Activated CD4-positive, alpha-beta memory T cell treated with anti-CD3 and anti-CD28 coated beads for 36 hours (primary cell): ENCODE measurements at regions of chr1 and their contacts with region 1.

Region 1: GRCh38 chr1:12386130-12386529 is 156.3 kb downstream of the VPS13D start:
- DNase-seq: peak; percentile 39
- H3K4me3 Mint-ChIP-seq: no peak overlapping the region
- H3K27ac Mint-ChIP-seq: peak overlapping the region; percentile 69
- H3K4me1 Mint-ChIP-seq: peaks cover 44% of the 10 kb centered on the region
- H3K27me3 Mint-ChIP-seq: no peaks in the 10 kb centered on the region

Region 2: DNA sequence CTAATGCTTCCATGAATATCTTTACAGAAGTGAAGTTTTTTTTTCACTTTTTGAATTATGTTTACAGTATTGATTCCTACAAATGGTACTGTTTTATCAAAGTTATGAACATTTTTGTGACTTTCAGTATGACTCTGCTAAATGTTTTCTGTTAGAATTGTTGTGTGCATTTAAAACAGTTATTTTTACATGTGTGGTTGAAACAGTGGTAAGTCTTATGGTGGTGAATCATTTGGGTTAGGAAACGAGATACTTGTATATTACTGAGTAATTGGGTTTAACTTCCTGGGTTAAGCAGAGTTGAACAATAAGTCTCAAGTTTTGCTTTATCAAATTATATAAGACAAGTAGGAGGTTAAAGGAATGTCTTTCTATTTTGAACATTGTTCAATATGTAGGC is 89.5 kb before region 1 on chr1:
- CTCF ChIA-PET with region 1: no interaction called
- POLR2A ChIA-PET with region 1: no interaction called
- intact Hi-C with region 1: loop called (anchors 10 kb)
- DNase-seq: no peak
- H3K4me3 Mint-ChIP-seq: no peak overlapping the region
- H3K27ac Mint-ChIP-seq: no peak overlapping the region
- H3K4me1 Mint-ChIP-seq: peaks cover 24% of the 10 kb centered on the region
- H3K27me3 Mint-ChIP-seq: no peaks in the 10 kb centered on the region

Region 3: DNA sequence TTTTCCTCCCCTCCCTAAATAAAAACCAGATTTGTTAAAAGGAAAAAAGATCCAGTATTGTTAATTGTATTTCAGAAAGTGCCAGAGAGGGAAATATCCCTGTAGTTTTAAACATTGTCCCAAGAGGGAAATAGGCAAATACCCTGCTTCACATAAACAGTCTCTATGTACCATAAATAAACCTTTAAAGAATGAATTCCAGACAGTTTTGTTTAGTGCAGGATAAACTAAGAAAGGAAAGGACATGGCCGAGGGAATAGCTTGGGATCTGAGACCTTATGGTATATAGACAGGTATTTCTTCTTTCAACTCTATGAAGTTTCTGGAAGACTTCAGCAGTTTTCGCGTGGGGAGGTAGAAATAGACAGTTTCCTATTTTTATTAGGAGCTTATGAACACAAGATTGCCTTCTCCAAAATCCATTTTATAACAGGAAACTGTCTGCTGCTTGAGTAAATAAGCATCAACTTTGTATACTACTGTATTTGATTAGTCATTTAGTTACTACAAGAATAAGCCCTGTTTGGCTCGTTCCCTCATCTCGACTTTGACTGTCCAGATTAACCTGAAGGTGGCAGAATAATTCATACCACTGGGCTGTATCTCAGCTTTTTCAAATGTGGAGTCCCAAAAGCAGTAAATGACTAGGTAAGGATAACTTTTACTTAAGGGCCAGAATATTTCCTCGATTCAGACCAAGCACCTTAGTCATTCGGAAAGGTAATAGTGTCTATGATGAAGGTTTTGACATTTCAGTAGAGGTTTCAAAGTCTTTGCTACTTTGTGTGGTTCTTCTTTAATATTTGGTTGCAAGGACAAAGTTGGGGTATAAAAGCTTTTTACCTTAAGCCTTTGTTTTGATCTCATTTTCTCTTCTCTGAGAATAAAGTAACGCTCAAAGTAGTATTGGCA is 21.2 kb after region 1 on chr1:
- CTCF ChIA-PET with region 1: interaction called, 3 read pairs
- POLR2A ChIA-PET with region 1: no interaction called
- intact Hi-C with region 1: loop called (anchors 2 kb)
- DNase-seq: peak; percentile 21
- H3K4me3 Mint-ChIP-seq: no peak overlapping the region
- H3K27ac Mint-ChIP-seq: no peak overlapping the region
- H3K4me1 Mint-ChIP-seq: peaks cover 20% of the 10 kb centered on the region
- H3K27me3 Mint-ChIP-seq: no peaks in the 10 kb centered on the region